ENCODE measurements at regions of chr3 and their contacts with region 1.

Region 1: DNA sequence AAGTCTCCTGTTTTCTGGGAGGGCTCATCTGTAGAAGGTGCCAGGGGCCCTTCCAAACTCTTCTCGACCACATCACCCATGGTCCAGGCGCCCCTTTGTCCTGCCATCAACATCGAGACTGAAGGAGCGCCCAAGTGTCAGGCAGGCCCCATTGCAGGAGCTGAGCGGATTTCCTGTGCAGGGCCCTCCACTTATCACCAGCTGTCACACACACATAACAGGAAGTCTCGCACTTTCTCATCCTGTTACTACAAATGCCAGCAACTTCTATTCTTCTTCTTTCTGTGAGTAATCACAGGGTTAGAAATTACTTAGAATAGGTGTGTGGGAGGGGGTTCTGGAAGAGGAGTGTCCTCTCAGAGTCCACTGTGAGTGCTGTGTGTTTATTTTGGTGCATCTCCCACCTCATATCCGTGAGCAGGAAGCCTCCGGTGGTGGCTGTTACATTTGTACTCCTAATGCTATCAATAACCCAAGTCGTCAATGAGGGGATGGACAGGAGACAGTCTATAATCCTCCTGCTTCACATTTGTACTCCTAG is at the start of gene KLHL6:
- DNase-seq: peak; percentile 51 to 87 (median 66)
- ATAC-seq: peak; percentile 92
- H3K4me3 ChIP-seq: peak within 1 kb of the TSS; percentile 82
- H3K4me3 Mint-ChIP-seq: peak within 1 kb of the TSS; percentile 99
- H3K27ac ChIP-seq: peak within 1 kb of the TSS; percentile 85 to 87
- H3K27ac Mint-ChIP-seq: peak within 1 kb of the TSS; percentile 99
- H3K4me1 ChIP-seq: peaks cover 36% of the 10 kb centered on the region
- H3K4me1 Mint-ChIP-seq: peaks cover 56% of the 10 kb centered on the region
- H3K27me3 ChIP-seq: no peaks in the 10 kb centered on the region
- H3K27me3 Mint-ChIP-seq: no peaks in the 10 kb centered on the region
- CTCF ChIP-seq: peak; percentile 14
- total RNA-seq, gene KLHL6: 23.9 to 24.2 TPM

Region 2: DNA sequence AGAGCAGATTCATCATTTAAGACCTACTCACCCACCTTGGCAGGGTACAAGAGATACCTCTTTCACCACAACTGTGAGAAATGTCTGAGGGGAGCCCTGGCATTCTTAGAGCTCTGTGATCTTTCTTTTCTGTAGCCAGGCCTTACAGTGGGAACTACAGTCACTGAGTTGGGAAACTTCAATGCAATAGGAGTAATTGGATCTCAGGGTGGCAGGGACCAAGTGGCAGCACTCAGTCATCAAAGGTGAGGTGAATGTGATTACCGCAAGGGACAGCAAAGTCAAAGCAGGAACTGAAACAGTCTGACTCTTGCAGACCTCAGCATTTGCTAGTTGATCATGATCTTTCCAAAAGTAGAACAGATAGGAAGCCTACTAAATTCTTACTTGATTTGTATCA is 120.0 kb before region 1 on chr3:
- CTCF ChIA-PET with region 1: no interaction called
- POLR2A ChIA-PET with region 1: no interaction called
- intact Hi-C with region 1: no loop called
- DNase-seq: peak in 3 of 14 experiments; percentile 21 to 24 (median 23)
- ATAC-seq: no peak
- H3K4me3 ChIP-seq: no peak overlapping the region
- H3K4me3 Mint-ChIP-seq: no peak overlapping the region
- H3K27ac ChIP-seq: no peak overlapping the region
- H3K27ac Mint-ChIP-seq: no peak overlapping the region
- H3K4me1 ChIP-seq: peaks cover 6% of the 10 kb centered on the region
- H3K4me1 Mint-ChIP-seq: peaks cover 5% of the 10 kb centered on the region
- H3K27me3 ChIP-seq: peaks cover 0 to 2% of the 10 kb centered on the region in 2 experiments
- H3K27me3 Mint-ChIP-seq: no peaks in the 10 kb centered on the region
- CTCF ChIP-seq: no peak

Region 3: GRCh38 chr3:183468424-183468823 is 87.2 kb before region 1 on chr3:
- CTCF ChIA-PET with region 1: no interaction called
- POLR2A ChIA-PET with region 1: interaction called, 3 read pairs
- intact Hi-C with region 1: loop called (anchors 1 kb)
- DNase-seq: no peak
- ATAC-seq: no peak
- H3K4me3 ChIP-seq: no peak overlapping the region
- H3K4me3 Mint-ChIP-seq: no peak overlapping the region
- H3K27ac ChIP-seq: no peak overlapping the region
- H3K27ac Mint-ChIP-seq: no peak overlapping the region
- H3K4me1 ChIP-seq: peaks cover 7% of the 10 kb centered on the region
- H3K4me1 Mint-ChIP-seq: peaks cover 5% of the 10 kb centered on the region
- H3K27me3 ChIP-seq: no peaks in the 10 kb centered on the region
- H3K27me3 Mint-ChIP-seq: no peaks in the 10 kb centered on the region
- CTCF ChIP-seq: no peak

Region 4: DNA sequence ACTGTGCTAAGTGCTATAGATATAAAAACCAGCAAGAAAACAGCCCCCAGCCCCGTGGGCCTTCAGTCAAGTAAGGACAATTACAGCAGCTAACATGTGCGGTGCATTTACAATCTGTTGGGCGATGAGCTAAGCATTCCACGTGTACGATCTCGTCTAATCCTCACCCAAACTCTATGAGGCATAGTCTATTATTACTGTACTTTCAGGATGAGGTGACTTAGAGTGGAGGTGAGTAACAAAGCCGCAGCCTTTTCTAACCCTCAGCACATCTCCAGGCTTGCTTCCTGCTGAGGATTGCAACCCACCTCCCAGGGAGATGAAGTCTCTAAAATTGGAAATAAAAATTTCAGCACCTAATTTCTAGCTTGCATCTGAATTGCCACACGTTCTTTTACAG is 74.0 kb before region 1 on chr3:
- CTCF ChIA-PET with region 1: no interaction called
- POLR2A ChIA-PET with region 1: no interaction called
- intact Hi-C with region 1: loop called in 1 of 2 experiments (anchors 5 kb)
- DNase-seq: no peak
- ATAC-seq: no peak
- H3K4me3 ChIP-seq: no peak overlapping the region
- H3K4me3 Mint-ChIP-seq: no peak overlapping the region
- H3K27ac ChIP-seq: no peak overlapping the region
- H3K27ac Mint-ChIP-seq: no peak overlapping the region
- H3K4me1 ChIP-seq: no peaks in the 10 kb centered on the region
- H3K4me1 Mint-ChIP-seq: peaks cover 12% of the 10 kb centered on the region
- H3K27me3 ChIP-seq: no peaks in the 10 kb centered on the region
- H3K27me3 Mint-ChIP-seq: no peaks in the 10 kb centered on the region
- CTCF ChIP-seq: no peak

Region 5: DNA sequence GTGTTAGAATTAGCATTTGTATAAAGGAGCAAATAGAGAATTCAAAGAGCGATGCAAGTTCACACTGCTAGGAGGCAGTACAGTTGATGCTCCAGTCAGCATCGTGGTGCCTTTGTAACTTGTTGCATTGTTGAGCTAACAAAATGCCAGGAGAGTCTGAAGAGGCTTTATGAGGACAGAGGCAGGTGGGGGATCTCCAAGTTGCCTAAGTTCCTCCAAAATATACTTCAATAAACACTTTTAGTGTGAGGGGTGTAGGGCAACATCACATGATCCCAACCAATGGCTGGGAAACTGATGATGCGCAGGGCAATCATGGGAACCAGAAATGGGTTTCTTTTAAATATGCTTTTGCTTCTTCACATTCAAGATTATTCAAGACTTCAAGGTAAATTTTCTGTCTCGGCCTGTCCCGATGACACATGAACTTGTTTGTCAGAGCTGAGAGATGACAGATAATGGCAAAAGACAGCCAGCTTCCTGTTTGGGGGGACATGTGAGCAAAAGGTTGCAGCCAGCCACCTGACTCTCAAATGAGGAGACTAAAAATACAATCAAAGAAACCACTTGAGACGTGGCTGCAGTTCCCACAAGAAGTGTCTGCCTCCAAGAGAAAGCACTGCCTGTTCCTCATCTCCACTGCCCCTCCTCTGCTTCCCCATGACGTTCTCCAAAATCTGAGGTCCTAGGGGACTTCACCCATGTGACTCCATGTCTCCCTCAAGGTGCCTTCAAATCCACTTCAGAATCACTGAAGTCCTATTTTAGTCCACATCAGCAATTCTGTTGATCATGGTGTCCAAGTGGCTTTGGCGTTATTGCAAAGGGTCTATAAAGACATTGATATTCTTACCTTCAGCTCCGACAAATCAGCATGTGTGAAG is 39.4 kb before region 1 on chr3:
- CTCF ChIA-PET with region 1: interaction called, 5 read pairs
- POLR2A ChIA-PET with region 1: interaction called, 6 read pairs
- intact Hi-C with region 1: loop called (anchors 1 to 5 kb)
- DNase-seq: peak; percentile 28 to 89 (median 57)
- ATAC-seq: peak; percentile 71
- H3K4me3 ChIP-seq: no peak overlapping the region
- H3K4me3 Mint-ChIP-seq: peak overlapping the region; percentile 31
- H3K27ac ChIP-seq: peak overlapping the region; percentile 35 to 71
- H3K27ac Mint-ChIP-seq: peak overlapping the region; percentile 89
- H3K4me1 ChIP-seq: peaks cover 64% of the 10 kb centered on the region
- H3K4me1 Mint-ChIP-seq: peaks cover 87% of the 10 kb centered on the region
- H3K27me3 ChIP-seq: no peaks in the 10 kb centered on the region
- H3K27me3 Mint-ChIP-seq: no peaks in the 10 kb centered on the region
- CTCF ChIP-seq: no peak

Region 6: GRCh38 chr3:183566880-183567279 is 11.3 kb after region 1 on chr3:
- CTCF ChIA-PET with region 1: no interaction called
- POLR2A ChIA-PET with region 1: no interaction called
- intact Hi-C with region 1: no loop called
- DNase-seq: no peak
- ATAC-seq: no peak
- H3K4me3 ChIP-seq: no peak overlapping the region
- H3K4me3 Mint-ChIP-seq: no peak overlapping the region
- H3K27ac ChIP-seq: no peak overlapping the region
- H3K27ac Mint-ChIP-seq: no peak overlapping the region
- H3K4me1 ChIP-seq: no peaks in the 10 kb centered on the region
- H3K4me1 Mint-ChIP-seq: no peaks in the 10 kb centered on the region
- H3K27me3 ChIP-seq: no peaks in the 10 kb centered on the region
- H3K27me3 Mint-ChIP-seq: no peaks in the 10 kb centered on the region
- CTCF ChIP-seq: no peak

Region 7: DNA sequence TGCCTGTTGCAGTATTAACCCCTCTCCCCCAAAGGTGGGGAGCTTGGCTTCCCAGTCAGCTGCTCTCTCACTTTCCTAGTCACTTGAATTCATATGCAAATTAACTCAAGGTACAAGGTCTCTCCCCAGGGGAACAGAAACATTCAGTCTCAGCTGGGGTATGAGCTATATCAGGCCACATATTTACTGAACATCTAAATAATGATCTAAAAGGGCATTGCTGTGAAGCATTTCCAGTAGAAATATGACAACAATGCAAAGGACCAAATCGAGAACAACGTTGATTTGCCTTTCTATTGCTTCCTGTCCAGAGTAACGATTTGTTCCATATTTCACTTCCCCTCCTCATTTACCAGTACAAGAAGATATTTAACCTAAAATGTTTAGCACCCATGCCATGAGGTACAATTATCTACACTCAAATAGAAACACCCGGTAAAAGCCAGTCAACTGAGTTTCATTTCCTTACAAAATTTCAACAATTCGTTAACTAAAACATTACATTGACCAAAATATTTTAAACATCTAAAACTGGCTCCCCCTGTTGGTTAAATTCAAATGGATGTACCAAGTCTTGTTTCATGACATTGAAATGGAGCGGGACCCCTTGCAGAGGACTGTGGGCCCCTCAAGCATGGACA is 36.4 kb after region 1 on chr3:
- CTCF ChIA-PET with region 1: no interaction called
- POLR2A ChIA-PET with region 1: interaction called, 6 read pairs
- intact Hi-C with region 1: loop called in 1 of 2 experiments (anchors 5 kb)
- DNase-seq: peak in 3 of 14 experiments; percentile 57 to 60 (median 59)
- ATAC-seq: no peak
- H3K4me3 ChIP-seq: peak overlapping the region; percentile 2
- H3K4me3 Mint-ChIP-seq: peak overlapping the region; percentile 81
- H3K27ac ChIP-seq: no peak overlapping the region
- H3K27ac Mint-ChIP-seq: peak overlapping the region; percentile 62
- H3K4me1 ChIP-seq: peaks cover 32% of the 10 kb centered on the region
- H3K4me1 Mint-ChIP-seq: peaks cover 44% of the 10 kb centered on the region
- H3K27me3 ChIP-seq: no peaks in the 10 kb centered on the region
- H3K27me3 Mint-ChIP-seq: no peaks in the 10 kb centered on the region
- CTCF ChIP-seq: peak; percentile 48